Activated CD4-positive, alpha-beta memory T cell treated with anti-CD3 and anti-CD28 coated beads, Interleukin-2, amount 10 ng/mL, durations not matched to agents 7 days and 5 days (primary cell): ENCODE measurements at regions of chr16 and their contacts with region 1.

Region 1: GRCh38 chr16:56625140-56625942 is at the start of gene MT1E:
- DNase-seq: peak; percentile 61
- H3K4me3 Mint-ChIP-seq: peak within 1 kb of the TSS; percentile 80
- H3K27ac Mint-ChIP-seq: peak within 1 kb of the TSS; percentile 58
- H3K4me1 Mint-ChIP-seq: peaks cover 14% of the 10 kb centered on the region
- H3K27me3 Mint-ChIP-seq: peaks cover 43% of the 10 kb centered on the region
- total RNA-seq, gene MT1E: 10.4 to 12.3 TPM

Region 2: DNA sequence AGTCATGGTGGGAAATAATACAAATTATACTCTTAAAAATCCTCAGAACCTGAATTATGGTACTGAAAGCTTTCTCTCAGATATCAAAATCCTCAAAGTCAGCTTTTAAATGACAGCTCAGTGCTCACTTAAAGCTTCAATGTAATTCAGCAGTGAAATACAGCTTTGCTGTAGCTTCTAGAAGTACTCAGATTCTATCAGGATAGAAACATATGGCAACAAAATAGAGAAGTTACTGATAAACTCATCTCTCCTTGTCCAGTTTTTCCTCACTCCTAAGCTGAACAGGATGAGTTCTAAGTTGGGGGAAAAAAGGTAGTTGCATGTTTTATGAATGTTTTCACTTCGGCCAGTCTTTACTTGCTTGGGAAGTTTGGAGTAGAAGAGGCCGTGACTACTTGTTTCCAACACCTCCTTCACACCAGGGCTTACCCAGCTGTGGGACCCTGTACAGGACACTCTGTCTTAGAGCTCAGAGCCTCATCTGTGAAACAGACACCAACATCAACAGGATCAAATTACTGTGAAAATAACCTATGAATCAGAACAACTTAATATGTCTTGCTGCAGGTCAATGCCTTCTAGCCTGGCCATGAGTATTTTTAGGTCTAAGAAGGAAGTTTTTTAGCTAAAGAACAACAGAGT is 143.8 kb before region 1 on chr16:
- CTCF ChIA-PET with region 1: no interaction called
- POLR2A ChIA-PET with region 1: no interaction called
- DNase-seq: no peak
- H3K4me3 Mint-ChIP-seq: no peak overlapping the region
- H3K27ac Mint-ChIP-seq: no peak overlapping the region
- H3K4me1 Mint-ChIP-seq: peaks cover 8% of the 10 kb centered on the region
- H3K27me3 Mint-ChIP-seq: no peaks in the 10 kb centered on the region

Region 3: DNA sequence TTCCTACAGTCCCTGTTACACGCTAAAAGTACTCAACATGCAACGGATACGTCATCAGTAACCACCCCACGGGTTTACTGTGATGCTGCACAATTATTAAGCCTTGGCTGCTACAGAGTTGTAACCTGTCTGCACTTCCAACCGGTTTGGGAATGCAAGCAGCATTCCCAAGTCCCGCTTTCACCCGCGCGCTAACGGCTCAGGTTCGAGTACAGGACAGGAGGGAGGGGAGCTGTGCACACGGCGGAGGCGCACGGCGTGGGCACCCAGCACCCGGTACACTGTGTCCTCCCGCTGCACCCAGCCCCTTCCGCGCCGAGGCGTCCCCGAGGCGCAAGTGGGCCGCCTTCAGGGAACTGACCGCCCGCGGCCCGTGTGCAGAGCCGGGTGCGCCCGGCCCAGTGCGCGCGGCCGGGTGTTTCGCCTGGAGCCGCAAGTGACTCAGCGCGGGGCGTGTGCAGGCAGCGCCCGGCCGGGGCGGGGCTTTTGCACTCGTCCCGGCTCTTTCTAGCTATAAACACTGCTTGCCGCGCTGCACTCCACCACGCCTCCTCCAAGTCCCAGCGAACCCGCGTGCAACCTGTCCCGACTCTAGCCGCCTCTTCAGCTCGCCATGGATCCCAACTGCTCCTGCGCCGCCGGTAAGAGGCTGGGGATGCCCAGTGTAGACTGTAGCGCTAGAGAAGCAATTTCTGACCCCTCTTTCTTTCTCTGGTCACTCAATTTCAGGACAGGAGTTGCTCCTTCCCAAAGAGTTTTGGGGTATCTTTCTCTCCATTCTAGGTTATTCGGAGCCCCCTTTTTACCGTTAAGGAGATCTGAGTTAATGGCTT is 17.1 kb before region 1 on chr16 and contains the start of gene MT2A:
- CTCF ChIA-PET with region 1: interaction called, 9 read pairs
- POLR2A ChIA-PET with region 1: interaction called, 96 read pairs
- DNase-seq: peak; percentile 93
- H3K4me3 Mint-ChIP-seq: peak within 1 kb of the TSS; percentile 93
- H3K27ac Mint-ChIP-seq: peak within 1 kb of the TSS; percentile 78
- H3K4me1 Mint-ChIP-seq: peaks cover 43% of the 10 kb centered on the region
- H3K27me3 Mint-ChIP-seq: peaks cover 2% of the 10 kb centered on the region
- total RNA-seq, gene MT2A: 47.9 to 51.4 TPM

Region 4: GRCh38 chr16:56614549-56614991 is 10.8 kb before region 1 on chr16:
- CTCF ChIA-PET with region 1: interaction called, 8 read pairs
- POLR2A ChIA-PET with region 1: interaction called, 96 read pairs
- DNase-seq: no peak
- H3K4me3 Mint-ChIP-seq: no peak overlapping the region
- H3K27ac Mint-ChIP-seq: no peak overlapping the region
- H3K4me1 Mint-ChIP-seq: peaks cover 45% of the 10 kb centered on the region
- H3K27me3 Mint-ChIP-seq: peaks cover 26% of the 10 kb centered on the region

Region 5: GRCh38 chr16:56643080-56643778 is 17.9 kb after region 1 on chr16:
- CTCF ChIA-PET with region 1: interaction called, 14 read pairs
- POLR2A ChIA-PET with region 1: interaction called, 12 read pairs
- DNase-seq: peak; percentile 85
- H3K4me3 Mint-ChIP-seq: peak overlapping the region; percentile 58
- H3K27ac Mint-ChIP-seq: no peak overlapping the region
- H3K4me1 Mint-ChIP-seq: peaks cover 24% of the 10 kb centered on the region
- H3K27me3 Mint-ChIP-seq: peaks cover 68% of the 10 kb centered on the region

Region 6: GRCh38 chr16:56681939-56682702 is 56.8 kb after region 1 on chr16 and contains the start of gene MT1X:
- CTCF ChIA-PET with region 1: interaction called, 4 read pairs
- POLR2A ChIA-PET with region 1: interaction called, 12 read pairs
- DNase-seq: peak; percentile 95
- H3K4me3 Mint-ChIP-seq: peak within 1 kb of the TSS; percentile 89
- H3K27ac Mint-ChIP-seq: peak within 1 kb of the TSS; percentile 92
- H3K4me1 Mint-ChIP-seq: peaks cover 30% of the 10 kb centered on the region
- H3K27me3 Mint-ChIP-seq: no peaks in the 10 kb centered on the region
- total RNA-seq, gene MT1X: 28.4 to 33.1 TPM

Region 7: DNA sequence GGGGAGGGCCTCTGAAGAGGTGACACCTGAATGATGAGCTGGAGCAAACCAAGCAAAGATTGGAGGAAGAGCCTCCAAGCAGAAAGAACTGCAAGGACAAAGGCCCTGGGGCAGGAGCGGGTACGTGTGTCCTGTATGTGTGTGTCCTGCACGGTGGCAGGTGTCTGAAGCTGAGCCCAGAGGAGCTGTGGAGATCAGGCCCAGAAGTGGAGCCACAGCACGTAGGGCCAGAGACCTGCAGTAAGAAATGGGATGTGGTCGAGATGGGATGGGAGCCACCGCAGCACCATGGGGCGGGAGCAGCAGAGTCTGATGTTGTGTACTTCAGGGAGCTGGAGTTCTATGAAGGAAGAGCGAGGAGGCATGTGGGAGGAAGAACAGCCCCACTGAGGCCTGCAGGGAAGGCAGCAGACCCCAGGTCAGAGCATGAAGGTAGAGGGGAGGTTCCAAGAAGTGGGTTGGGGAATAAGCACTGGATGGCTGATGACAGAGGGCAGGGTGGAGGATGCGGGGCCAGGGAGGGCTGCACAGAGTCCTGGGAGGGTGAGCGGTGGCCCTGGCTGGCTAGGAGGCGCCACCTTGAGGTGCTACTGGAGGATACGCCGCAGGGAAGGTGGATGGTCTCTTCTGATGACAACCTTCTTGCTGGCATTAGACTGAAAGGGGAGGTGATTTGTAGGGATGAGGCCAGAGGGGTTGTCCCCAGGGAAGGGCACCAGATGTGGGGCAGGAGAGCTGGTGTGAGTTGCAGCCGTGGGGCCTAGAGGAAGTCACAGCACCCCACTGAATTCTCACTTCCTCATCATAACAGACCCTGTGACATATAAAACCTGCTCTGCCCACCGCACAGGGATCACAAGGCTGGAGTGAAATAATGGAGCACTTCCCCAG is 325.8 kb after region 1 on chr16:
- CTCF ChIA-PET with region 1: no interaction called
- POLR2A ChIA-PET with region 1: no interaction called
- DNase-seq: peak; percentile 66
- H3K4me3 Mint-ChIP-seq: no peak overlapping the region
- H3K27ac Mint-ChIP-seq: no peak overlapping the region
- H3K4me1 Mint-ChIP-seq: peaks cover 20% of the 10 kb centered on the region
- H3K27me3 Mint-ChIP-seq: no peaks in the 10 kb centered on the region